Activated T-helper 1 cell treated with anti-CD3 and anti-CD28 coated beads, Interleukin-12 subunit alpha, Interleukin-12 subunit beta, Interleukin-2, Interleukin-4 antibody, amounts not matched to agents 30 ng/mL and 10 ng/mL and 1 ng/mL, durations not matched to agents 14 hours and 24 hours and 36 hours (primary cell): ENCODE measurements at regions of chrX and their contacts with region 1.

Region 1: GRCh38 chrX:120560842-120561633 is at the start of gene CUL4B:
- DNase-seq: peak; percentile 89
- H3K4me3 Mint-ChIP-seq: peak within 1 kb of the TSS; percentile 99
- H3K27ac Mint-ChIP-seq: peak within 1 kb of the TSS; percentile 97
- H3K4me1 Mint-ChIP-seq: peaks cover 30% of the 10 kb centered on the region
- H3K27me3 Mint-ChIP-seq: no peaks in the 10 kb centered on the region
- total RNA-seq, gene CUL4B: 25.2 and 26.5 TPM in 2 replicates

Region 2: GRCh38 chrX:120603707-120604360 is 42.8 kb after region 1 on chrX and contains the start of gene MCTS1:
- intact Hi-C with region 1: loop called (anchors 1 kb)
- DNase-seq: peak; percentile 75
- H3K4me3 Mint-ChIP-seq: peak within 1 kb of the TSS; percentile 99
- H3K27ac Mint-ChIP-seq: peak within 1 kb of the TSS; percentile 99
- H3K4me1 Mint-ChIP-seq: peaks cover 10% of the 10 kb centered on the region
- H3K27me3 Mint-ChIP-seq: no peaks in the 10 kb centered on the region
- total RNA-seq, gene MCTS1: 67.3 and 70.1 TPM in 2 replicates

Region 3: DNA sequence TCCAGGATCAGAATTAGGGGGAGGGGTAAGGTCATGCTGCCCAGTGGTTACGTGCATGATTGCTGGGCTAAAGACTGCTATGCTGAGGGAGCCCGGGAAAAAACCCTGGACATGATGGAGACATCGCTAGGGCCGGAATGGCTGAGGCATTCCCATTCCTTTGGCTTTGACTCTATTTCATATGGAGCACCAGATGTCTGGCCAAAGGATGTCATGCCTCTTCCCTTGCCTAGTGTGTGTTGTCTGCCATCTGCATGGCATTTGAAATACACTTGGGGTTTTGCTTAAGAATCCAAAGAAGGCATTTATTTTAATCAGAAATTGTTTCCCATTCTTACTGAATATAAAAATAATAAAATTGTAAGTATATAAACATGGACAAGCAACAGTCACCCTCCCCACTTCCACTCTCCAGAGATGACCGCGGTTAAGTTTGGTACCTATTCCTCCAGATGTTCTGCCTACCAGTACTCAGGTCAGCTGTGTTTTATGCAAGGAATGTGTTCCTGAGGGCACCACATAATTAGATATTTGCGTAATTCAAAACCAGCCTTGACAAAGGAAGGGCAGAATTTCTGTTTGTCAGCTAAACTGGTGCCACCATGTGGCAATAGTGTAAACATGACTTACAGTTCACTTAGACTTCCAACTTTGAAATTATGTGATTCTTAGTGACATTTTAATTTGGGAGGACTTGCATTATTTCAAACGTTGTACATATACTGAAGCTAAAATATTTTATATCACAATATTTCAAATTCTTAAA is 208.7 kb after region 1 on chrX:
- intact Hi-C with region 1: loop called (anchors 5 kb)
- DNase-seq: no peak
- H3K4me3 Mint-ChIP-seq: no peak overlapping the region
- H3K27ac Mint-ChIP-seq: no peak overlapping the region
- H3K4me1 Mint-ChIP-seq: no peaks in the 10 kb centered on the region
- H3K27me3 Mint-ChIP-seq: no peaks in the 10 kb centered on the region